ENCODE measurements at regions of chr20 and their contacts with region 1.

Region 1: GRCh38 chr20:21719592-21720214 is 14.2 kb downstream of the PAX1 start:
- DNase-seq: peak; percentile 69
- H3K4me3 Mint-ChIP-seq: no peak overlapping the region
- H3K27ac Mint-ChIP-seq: no peak overlapping the region
- H3K4me1 Mint-ChIP-seq: peaks cover 3% of the 10 kb centered on the region
- H3K27me3 Mint-ChIP-seq: peaks cover 32% of the 10 kb centered on the region

Region 2: GRCh38 chr20:21702553-21703470 is 16.9 kb before region 1 on chr20:
- CTCF ChIA-PET with region 1: interaction called, 13 read pairs
- intact Hi-C with region 1: no loop called
- DNase-seq: peak; percentile 71
- H3K4me3 Mint-ChIP-seq: no peak overlapping the region
- H3K27ac Mint-ChIP-seq: no peak overlapping the region
- H3K4me1 Mint-ChIP-seq: peaks cover 12% of the 10 kb centered on the region
- H3K27me3 Mint-ChIP-seq: peaks cover 83% of the 10 kb centered on the region

Region 3: GRCh38 chr20:21767739-21768223 is 48.1 kb after region 1 on chr20:
- CTCF ChIA-PET with region 1: interaction called, 15 read pairs
- intact Hi-C with region 1: no loop called
- DNase-seq: peak; percentile 7
- H3K4me3 Mint-ChIP-seq: no peak overlapping the region
- H3K27ac Mint-ChIP-seq: no peak overlapping the region
- H3K4me1 Mint-ChIP-seq: no peaks in the 10 kb centered on the region
- H3K27me3 Mint-ChIP-seq: peaks cover 7% of the 10 kb centered on the region

Region 4: GRCh38 chr20:22248051-22248667 is 528.5 kb after region 1 on chr20:
- CTCF ChIA-PET with region 1: no interaction called
- intact Hi-C with region 1: loop called (anchors 5 kb)
- DNase-seq: no peak
- H3K4me3 Mint-ChIP-seq: no peak overlapping the region
- H3K27ac Mint-ChIP-seq: no peak overlapping the region
- H3K4me1 Mint-ChIP-seq: no peaks in the 10 kb centered on the region
- H3K27me3 Mint-ChIP-seq: no peaks in the 10 kb centered on the region

Region 5: GRCh38 chr20:22312744-22313346 is 593.1 kb after region 1 on chr20:
- CTCF ChIA-PET with region 1: no interaction called
- intact Hi-C with region 1: loop called (anchors 5 kb)
- DNase-seq: no peak
- H3K4me3 Mint-ChIP-seq: no peak overlapping the region
- H3K27ac Mint-ChIP-seq: no peak overlapping the region
- H3K4me1 Mint-ChIP-seq: no peaks in the 10 kb centered on the region
- H3K27me3 Mint-ChIP-seq: no peaks in the 10 kb centered on the region

Measured in activated naive CD4-positive, alpha-beta T cell treated with anti-CD3 and anti-CD28 coated beads for 36 hours (primary cell).